ENCODE measurements at regions of chr2 and their contacts with region 1.

Region 1: DNA sequence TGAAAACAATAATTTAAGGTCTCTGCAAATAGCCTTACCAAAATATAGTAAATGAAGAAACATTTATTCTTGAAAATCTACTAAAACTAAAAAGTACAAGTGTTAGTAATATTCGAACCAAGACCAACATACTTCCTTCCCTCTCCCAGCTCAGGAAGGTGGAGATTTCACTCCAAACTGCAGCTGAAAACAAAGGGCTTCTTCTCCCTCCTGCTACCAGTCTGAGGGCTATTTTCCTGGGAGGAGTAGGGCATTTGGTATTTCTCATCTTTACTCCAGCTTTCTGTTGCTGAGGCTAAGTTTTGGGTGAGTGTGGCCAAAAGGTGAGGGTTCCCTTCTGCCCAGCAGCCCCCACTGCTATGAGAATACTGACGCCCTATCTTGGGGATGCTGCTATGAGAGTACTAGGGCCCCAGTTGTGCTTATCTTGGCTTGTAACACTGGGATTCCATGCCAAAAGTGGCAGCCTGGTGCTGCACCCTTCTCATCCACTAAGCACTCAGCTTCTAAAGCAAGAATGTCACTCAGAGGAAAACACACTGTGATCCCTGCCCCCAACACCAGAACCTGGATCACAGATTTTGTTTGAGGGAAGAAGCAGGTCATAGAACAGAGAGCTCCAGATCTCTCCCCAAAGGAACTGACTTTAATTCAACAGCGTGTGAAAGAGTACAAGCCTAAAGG is 130.7 kb upstream of the KLF7 start:
- DNase-seq: no peak
- H3K4me3 ChIP-seq: no peak overlapping the region
- H3K4me3 Mint-ChIP-seq: no peak overlapping the region
- H3K27ac ChIP-seq: no peak overlapping the region
- H3K27ac Mint-ChIP-seq: no peak overlapping the region
- H3K4me1 ChIP-seq: no peaks in the 10 kb centered on the region
- H3K4me1 Mint-ChIP-seq: no peaks in the 10 kb centered on the region
- H3K27me3 ChIP-seq: no peaks in the 10 kb centered on the region
- H3K27me3 Mint-ChIP-seq: no peaks in the 10 kb centered on the region
- CTCF ChIP-seq: no peak

Region 2: GRCh38 chr2:207258263-207258991 is 38.0 kb before region 1 on chr2:
- intact Hi-C with region 1: loop called in 1 of 2 experiments (anchors 5 kb)
- DNase-seq: peak; percentile 39 to 52 (median 51)
- H3K4me3 ChIP-seq: peak overlapping the region in 1 of 3 experiments; percentile 46
- H3K4me3 Mint-ChIP-seq: peak overlapping the region; percentile 42 to 81
- H3K27ac ChIP-seq: peak overlapping the region; percentile 13 to 76
- H3K27ac Mint-ChIP-seq: peak overlapping the region in 6 of 7 donors; percentile 45 to 86 (median 74)
- H3K4me1 ChIP-seq: peaks cover 55 to 56% of the 10 kb centered on the region in 2 donors
- H3K4me1 Mint-ChIP-seq: peaks cover 54% of the 10 kb centered on the region
- H3K27me3 ChIP-seq: no peaks in the 10 kb centered on the region
- H3K27me3 Mint-ChIP-seq: peaks cover 0 to 2% (median 0%) of the 10 kb centered on the region in 3 donors
- CTCF ChIP-seq: no peak